GM12878 (cell line): ENCODE measurements at regions of chr3 and their contacts with region 1.

Region 1: GRCh38 chr3:193665370-193665989 is 72.5 kb downstream of the OPA1 start:
- DNase-seq: no peak
- ATAC-seq: no peak
- H3K4me3 ChIP-seq: no peak overlapping the region
- H3K27ac ChIP-seq: no peak overlapping the region
- H3K4me1 ChIP-seq: no peaks in the 10 kb centered on the region
- H3K27me3 ChIP-seq: no peaks in the 10 kb centered on the region
- CTCF ChIP-seq: peak in 2 of 3 experiments; percentile 10 to 19; a peak in 2 of 6 replicates
- EP300 ChIP-seq: no peak
- POLR2A ChIP-seq: no peak
- RAD21 ChIP-seq: 0 out of 2 replicates have a peak, but pooled peaks have one; percentile 35

Region 2: GRCh38 chr3:193645806-193646205 is 19.7 kb before region 1 on chr3:
- CTCF ChIA-PET with region 1: interaction called, 13 read pairs
- POLR2A ChIA-PET with region 1: no interaction called
- RAD21 ChIA-PET with region 1: no interaction called
- SMC1A ChIA-PET with region 1: interaction called, 19 read pairs
- in situ Hi-C with region 1: no loop called
- intact Hi-C with region 1: no loop called
- DNase-seq: no peak
- ATAC-seq: no peak
- H3K4me3 ChIP-seq: no peak overlapping the region
- H3K27ac ChIP-seq: no peak overlapping the region
- H3K4me1 ChIP-seq: no peaks in the 10 kb centered on the region
- H3K27me3 ChIP-seq: no peaks in the 10 kb centered on the region
- CTCF ChIP-seq: no peak
- EP300 ChIP-seq: no peak
- POLR2A ChIP-seq: no peak
- RAD21 ChIP-seq: no peak

Region 3: GRCh38 chr3:193773266-193774220 is 108.1 kb after region 1 on chr3:
- CTCF ChIA-PET with region 1: interaction called, 25 read pairs
- POLR2A ChIA-PET with region 1: no interaction called
- RAD21 ChIA-PET with region 1: no interaction called
- SMC1A ChIA-PET with region 1: interaction called, 14 read pairs
- in situ Hi-C with region 1: no loop called
- intact Hi-C with region 1: loop called (anchors 5 kb)
- DNase-seq: no peak
- ATAC-seq: no peak
- H3K4me3 ChIP-seq: no peak overlapping the region
- H3K27ac ChIP-seq: no peak overlapping the region
- H3K4me1 ChIP-seq: no peaks in the 10 kb centered on the region
- H3K27me3 ChIP-seq: no peaks in the 10 kb centered on the region
- CTCF ChIP-seq: no peak
- EP300 ChIP-seq: no peak
- POLR2A ChIP-seq: no peak
- RAD21 ChIP-seq: no peak

Region 4: GRCh38 chr3:194306109-194306686 is 640.7 kb after region 1 on chr3:
- CTCF ChIA-PET with region 1: interaction called, 12 read pairs
- POLR2A ChIA-PET with region 1: interaction called, 3 read pairs
- RAD21 ChIA-PET with region 1: interaction called, 3 read pairs
- SMC1A ChIA-PET with region 1: no interaction called
- in situ Hi-C with region 1: loop called (anchors 5 kb)
- intact Hi-C with region 1: no loop called
- DNase-seq: peak; percentile 61
- ATAC-seq: peak; percentile 74
- H3K4me3 ChIP-seq: no peak overlapping the region; the same call in 1 of the 2 replicates
- H3K27ac ChIP-seq: peak overlapping the region; percentile 75
- H3K4me1 ChIP-seq: peaks cover 46% of the 10 kb centered on the region
- H3K27me3 ChIP-seq: no peaks in the 10 kb centered on the region
- CTCF ChIP-seq: no peak
- EP300 ChIP-seq: no peak
- POLR2A ChIP-seq: no peak
- RAD21 ChIP-seq: no peak

Region 5: GRCh38 chr3:194344012-194344411 is 678.5 kb after region 1 on chr3:
- CTCF ChIA-PET with region 1: interaction called, 13 read pairs
- POLR2A ChIA-PET with region 1: no interaction called
- RAD21 ChIA-PET with region 1: no interaction called
- SMC1A ChIA-PET with region 1: no interaction called
- in situ Hi-C with region 1: no loop called
- intact Hi-C with region 1: no loop called
- DNase-seq: no peak
- ATAC-seq: peak; percentile 89
- H3K4me3 ChIP-seq: no peak overlapping the region
- H3K27ac ChIP-seq: no peak overlapping the region
- H3K4me1 ChIP-seq: no peaks in the 10 kb centered on the region
- H3K27me3 ChIP-seq: no peaks in the 10 kb centered on the region; a peak in 3 of 4 replicates
- CTCF ChIP-seq: peak; percentile 84 to 97 (median 91)
- EP300 ChIP-seq: no peak
- POLR2A ChIP-seq: no peak
- RAD21 ChIP-seq: peak; percentile 64